PC-9 (cell line): ENCODE measurements at regions of chr10 and their contacts with region 1.

Region 1: GRCh38 chr10:92756201-92757065 is 66.7 kb downstream of the HHEX start:
- DNase-seq: no peak
- H3K4me3 ChIP-seq: no peak overlapping the region
- H3K27ac ChIP-seq: no peak overlapping the region
- H3K4me1 ChIP-seq: peaks cover 11% of the 10 kb centered on the region; the same call in 1 of the 2 replicates
- H3K27me3 ChIP-seq: no peaks in the 10 kb centered on the region
- CTCF ChIP-seq: no peak

Region 2: GRCh38 chr10:92699518-92700381 is 56.7 kb before region 1 on chr10:
- CTCF ChIA-PET with region 1: interaction called, 13 read pairs
- POLR2A ChIA-PET with region 1: no interaction called
- intact Hi-C with region 1: no loop called
- DNase-seq: peak in 1 of 2 experiments; percentile 10
- H3K4me3 ChIP-seq: peak overlapping the region; percentile 48; the same call in 1 of the 2 replicates
- H3K27ac ChIP-seq: no peak overlapping the region
- H3K4me1 ChIP-seq: no peaks in the 10 kb centered on the region
- H3K27me3 ChIP-seq: no peaks in the 10 kb centered on the region
- CTCF ChIP-seq: no peak

Region 3: DNA sequence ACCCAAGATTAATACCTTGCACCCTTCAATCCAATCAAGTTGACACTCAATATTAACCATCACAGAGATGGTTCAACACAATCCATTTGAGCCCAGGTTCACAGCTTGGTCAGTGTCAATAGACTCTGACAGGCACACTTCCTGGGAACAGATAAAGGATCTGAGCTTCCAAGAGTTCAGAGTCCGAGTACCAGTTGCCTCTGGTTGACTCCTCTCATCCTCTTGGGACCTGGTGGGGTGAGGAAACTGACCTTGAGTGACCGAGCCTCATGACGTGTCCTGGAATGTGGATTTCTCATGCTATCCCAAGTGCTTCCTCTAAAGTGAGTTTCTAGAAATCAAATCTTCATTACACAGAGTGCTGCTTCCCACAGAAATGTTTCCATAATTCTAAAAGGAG is 479.3 kb after region 1 on chr10:
- CTCF ChIA-PET with region 1: no interaction called
- POLR2A ChIA-PET with region 1: no interaction called
- intact Hi-C with region 1: no loop called
- DNase-seq: no peak
- H3K4me3 ChIP-seq: no peak overlapping the region
- H3K27ac ChIP-seq: no peak overlapping the region
- H3K4me1 ChIP-seq: no peaks in the 10 kb centered on the region
- H3K27me3 ChIP-seq: no peaks in the 10 kb centered on the region
- CTCF ChIP-seq: no peak

Region 4: DNA sequence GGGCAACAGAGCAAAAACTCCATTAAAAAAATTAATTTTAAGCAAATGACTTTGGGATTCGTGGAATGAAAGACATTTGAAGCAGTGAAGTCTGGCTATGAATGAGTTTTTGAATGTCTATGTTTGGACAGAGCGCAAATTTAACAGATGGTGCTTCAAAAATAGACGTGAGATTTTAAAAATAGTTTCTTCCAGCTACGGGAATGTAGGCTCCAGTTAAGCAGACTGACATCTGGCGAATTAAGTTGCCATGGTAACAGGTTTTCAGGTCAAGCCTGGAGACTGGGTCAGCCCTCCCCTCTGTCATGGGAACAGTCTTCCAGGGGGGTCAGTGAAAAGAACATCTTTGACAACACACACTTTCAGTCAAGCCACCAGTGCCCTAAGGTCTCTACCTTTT is 663.7 kb after region 1 on chr10:
- CTCF ChIA-PET with region 1: no interaction called
- POLR2A ChIA-PET with region 1: no interaction called
- intact Hi-C with region 1: no loop called
- DNase-seq: no peak
- H3K4me3 ChIP-seq: no peak overlapping the region
- H3K27ac ChIP-seq: no peak overlapping the region
- H3K4me1 ChIP-seq: peaks cover 16% of the 10 kb centered on the region
- H3K27me3 ChIP-seq: no peaks in the 10 kb centered on the region
- CTCF ChIP-seq: no peak

Region 5: GRCh38 chr10:93757801-93758507 is 1001.5 kb after region 1 on chr10 and contains the start of gene LGI1:
- CTCF ChIA-PET with region 1: interaction called, 13 read pairs
- POLR2A ChIA-PET with region 1: no interaction called
- intact Hi-C with region 1: no loop called
- DNase-seq: no peak
- H3K4me3 ChIP-seq: no peak within 1 kb of the TSS
- H3K27ac ChIP-seq: no peak within 1 kb of the TSS
- H3K4me1 ChIP-seq: peaks cover 3% of the 10 kb centered on the region
- H3K27me3 ChIP-seq: no peaks in the 10 kb centered on the region
- CTCF ChIP-seq: no peak
- total RNA-seq, gene LGI1: not detected in 2 replicates